Panc1 (cell line): ENCODE measurements at regions of chr1 and their contacts with region 1.

Region 1: GRCh38 chr1:23044035-23044434 is 24.8 kb downstream of the KDM1A start:
- DNase-seq: no peak
- ATAC-seq: no peak
- H3K4me3 ChIP-seq: no peak overlapping the region
- H3K27ac ChIP-seq: no peak overlapping the region
- H3K4me1 ChIP-seq: peaks cover 5% of the 10 kb centered on the region; the same call in 1 of the 2 replicates
- H3K27me3 ChIP-seq: no peaks in the 10 kb centered on the region
- CTCF ChIP-seq: no peak

Region 2: GRCh38 chr1:22749919-22750688 is 293.9 kb before region 1 on chr1:
- CTCF ChIA-PET with region 1: no interaction called
- POLR2A ChIA-PET with region 1: interaction called, 10 read pairs
- in situ Hi-C with region 1: no loop called
- intact Hi-C with region 1: no loop called
- DNase-seq: peak; percentile 86
- ATAC-seq: peak; percentile 82
- H3K4me3 ChIP-seq: no peak overlapping the region; a peak in 1 of 4 replicates
- H3K27ac ChIP-seq: peak overlapping the region; percentile 66
- H3K4me1 ChIP-seq: peaks cover 39% of the 10 kb centered on the region
- H3K27me3 ChIP-seq: no peaks in the 10 kb centered on the region
- CTCF ChIP-seq: no peak

Region 3: GRCh38 chr1:23062271-23062670 is 18.2 kb after region 1 on chr1:
- CTCF ChIA-PET with region 1: no interaction called
- POLR2A ChIA-PET with region 1: interaction called, 17 read pairs
- in situ Hi-C with region 1: no loop called
- intact Hi-C with region 1: no loop called
- DNase-seq: no peak
- ATAC-seq: no peak
- H3K4me3 ChIP-seq: no peak overlapping the region
- H3K27ac ChIP-seq: no peak overlapping the region
- H3K4me1 ChIP-seq: no peaks in the 10 kb centered on the region
- H3K27me3 ChIP-seq: no peaks in the 10 kb centered on the region
- CTCF ChIP-seq: no peak

Region 4: GRCh38 chr1:23227806-23228205 is 183.8 kb after region 1 on chr1:
- CTCF ChIA-PET with region 1: no interaction called
- POLR2A ChIA-PET with region 1: no interaction called
- in situ Hi-C with region 1: no loop called
- intact Hi-C with region 1: no loop called
- DNase-seq: no peak
- ATAC-seq: no peak
- H3K4me3 ChIP-seq: no peak overlapping the region
- H3K27ac ChIP-seq: no peak overlapping the region
- H3K4me1 ChIP-seq: peaks cover 6% of the 10 kb centered on the region
- H3K27me3 ChIP-seq: no peaks in the 10 kb centered on the region
- CTCF ChIP-seq: no peak